Activated CD4-positive, alpha-beta T cell treated with anti-CD3 and anti-CD28 coated beads, Interleukin-2, amount 10 ng/mL, durations not matched to agents 24 days and 14 days (primary cell): ENCODE measurements at regions of chr2 and their contacts with region 1.

Region 1: GRCh38 chr2:98835831-98836385 is 100.1 kb downstream of the CRACDL start:
- DNase-seq: peak; percentile 80
- H3K4me3 Mint-ChIP-seq: peak overlapping the region; percentile 56
- H3K27ac Mint-ChIP-seq: peak overlapping the region; percentile 76
- H3K4me1 Mint-ChIP-seq: peaks cover 40% of the 10 kb centered on the region
- H3K27me3 Mint-ChIP-seq: peaks cover 11% of the 10 kb centered on the region

Region 2: DNA sequence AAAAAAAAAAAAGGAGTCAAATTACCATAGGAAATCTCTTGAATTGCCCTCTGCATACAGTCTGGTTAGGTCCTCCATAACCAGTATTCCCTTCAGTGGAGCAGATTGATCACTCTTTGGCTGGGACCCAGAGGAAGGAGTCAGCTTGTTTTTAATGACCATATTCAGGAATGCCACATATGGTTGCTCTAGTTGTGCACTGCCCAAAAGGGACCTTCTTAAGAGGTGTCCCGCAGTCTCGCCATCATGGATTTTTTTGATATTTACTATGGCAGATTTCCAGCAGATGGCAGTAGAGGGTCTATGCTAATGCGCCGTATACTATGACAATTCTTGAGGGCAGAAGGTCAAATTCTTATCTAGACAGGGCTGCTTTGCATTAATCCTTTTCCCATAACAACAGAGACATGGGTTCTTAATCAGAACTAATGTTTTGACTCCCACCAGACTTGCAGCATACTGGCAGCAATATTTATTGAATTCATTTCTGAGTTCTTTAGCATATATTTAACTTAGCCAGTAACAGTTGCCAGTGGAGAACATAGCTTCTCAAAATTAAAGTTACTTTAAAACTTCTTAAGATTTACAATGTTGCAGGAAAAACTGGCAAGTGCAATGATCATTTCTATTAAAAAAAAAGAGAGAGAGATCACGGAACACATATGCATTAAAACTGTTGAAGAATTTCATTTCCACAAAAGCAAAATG is 423.0 kb before region 1 on chr2:
- intact Hi-C with region 1: loop called (anchors 2 kb)
- DNase-seq: peak; percentile 92
- H3K4me3 Mint-ChIP-seq: no peak overlapping the region
- H3K27ac Mint-ChIP-seq: no peak overlapping the region
- H3K4me1 Mint-ChIP-seq: peaks cover 10% of the 10 kb centered on the region
- H3K27me3 Mint-ChIP-seq: peaks cover 10% of the 10 kb centered on the region

Region 3: GRCh38 chr2:98649135-98649991 is 186.5 kb before region 1 on chr2:
- intact Hi-C with region 1: loop called (anchors 1 kb)
- DNase-seq: peak; percentile 94
- H3K4me3 Mint-ChIP-seq: no peak overlapping the region
- H3K27ac Mint-ChIP-seq: peak overlapping the region; percentile 48
- H3K4me1 Mint-ChIP-seq: peaks cover 47% of the 10 kb centered on the region
- H3K27me3 Mint-ChIP-seq: no peaks in the 10 kb centered on the region

Region 4: GRCh38 chr2:99066075-99066958 is 230.4 kb after region 1 on chr2:
- intact Hi-C with region 1: loop called (anchors 5 kb)
- DNase-seq: peak; percentile 74
- H3K4me3 Mint-ChIP-seq: no peak overlapping the region
- H3K27ac Mint-ChIP-seq: no peak overlapping the region
- H3K4me1 Mint-ChIP-seq: no peaks in the 10 kb centered on the region
- H3K27me3 Mint-ChIP-seq: no peaks in the 10 kb centered on the region

Region 5: DNA sequence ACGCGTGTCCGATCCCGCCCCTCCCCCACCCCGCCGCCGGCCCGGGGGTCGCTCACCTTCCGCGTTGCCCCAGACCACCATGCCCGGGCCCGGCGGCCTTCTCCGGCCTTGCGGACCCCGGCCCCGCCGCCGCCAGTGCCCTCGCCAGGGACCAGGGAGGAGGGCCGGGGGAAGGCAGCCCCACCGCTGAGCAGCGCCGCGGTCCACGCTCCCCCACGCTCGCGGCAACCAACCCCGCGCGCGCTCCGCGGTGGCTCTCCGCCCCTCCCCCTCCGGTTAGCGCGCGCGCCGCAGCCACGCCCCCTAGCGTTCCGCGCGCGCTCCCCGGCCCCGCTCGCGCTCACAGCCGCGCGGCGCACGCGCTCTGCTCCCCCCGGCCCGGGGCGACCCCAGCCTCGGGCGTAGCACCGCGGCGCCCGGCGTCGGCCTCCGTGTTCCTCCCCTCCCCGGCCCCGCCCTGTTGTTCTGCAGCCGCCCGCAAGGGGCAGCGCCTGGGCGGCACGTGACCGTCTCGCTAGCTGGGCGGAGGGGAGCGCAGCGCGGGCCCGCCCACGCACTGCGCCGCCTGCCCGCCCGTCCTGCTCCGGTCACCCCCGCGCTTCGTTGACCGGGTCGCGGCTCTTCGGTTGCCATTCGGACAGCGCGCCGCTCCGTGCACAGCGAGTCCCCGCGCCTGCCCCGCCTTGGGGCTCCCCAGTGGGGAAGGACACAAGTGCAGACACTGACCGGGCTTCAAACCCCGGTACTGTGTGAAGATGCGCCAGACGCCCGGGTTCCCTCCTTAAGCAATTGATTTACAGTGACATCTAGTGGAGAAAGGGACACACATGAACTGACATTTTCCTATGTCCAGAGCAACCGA is 654.1 kb after region 1 on chr2 and contains the start of gene REV1:
- intact Hi-C with region 1: loop called (anchors 5 kb)
- DNase-seq: peak; percentile 97
- H3K4me3 Mint-ChIP-seq: peak within 1 kb of the TSS; percentile 92
- H3K27ac Mint-ChIP-seq: peak within 1 kb of the TSS; percentile 95
- H3K4me1 Mint-ChIP-seq: peaks cover 25% of the 10 kb centered on the region
- H3K27me3 Mint-ChIP-seq: no peaks in the 10 kb centered on the region
- total RNA-seq, gene REV1: 47.8 and 48.9 TPM in 2 replicates